ENCODE measurements at regions of chr3 and their contacts with region 1.

Region 1: DNA sequence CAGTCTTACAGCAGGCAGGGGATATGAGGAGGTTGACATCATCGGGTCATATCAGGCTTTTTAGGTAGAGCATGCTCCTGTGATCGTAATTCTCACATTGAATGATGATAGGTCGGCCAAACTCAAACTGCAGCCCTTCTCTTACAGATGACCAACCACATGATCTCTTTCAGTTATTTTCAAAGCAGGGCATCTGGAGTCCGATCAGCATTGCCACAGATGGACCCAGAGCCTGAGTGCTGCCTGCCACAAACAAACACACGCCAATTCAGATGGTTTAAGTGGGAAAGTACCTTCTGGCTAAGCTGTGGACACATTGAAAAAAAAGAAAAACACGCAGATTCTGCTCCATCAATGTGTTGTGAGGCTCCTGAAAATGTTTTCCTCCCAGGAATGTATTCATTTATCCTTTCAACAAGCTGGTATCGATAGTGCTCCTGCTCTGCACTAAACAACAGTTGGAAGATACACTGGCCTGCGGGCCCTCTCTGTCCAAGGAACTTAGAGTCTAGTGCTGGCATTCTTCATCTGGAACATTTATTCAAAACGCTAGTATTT is 31.2 kb downstream of the ARPP21 start:
- DNase-seq: no peak

Region 2: DNA sequence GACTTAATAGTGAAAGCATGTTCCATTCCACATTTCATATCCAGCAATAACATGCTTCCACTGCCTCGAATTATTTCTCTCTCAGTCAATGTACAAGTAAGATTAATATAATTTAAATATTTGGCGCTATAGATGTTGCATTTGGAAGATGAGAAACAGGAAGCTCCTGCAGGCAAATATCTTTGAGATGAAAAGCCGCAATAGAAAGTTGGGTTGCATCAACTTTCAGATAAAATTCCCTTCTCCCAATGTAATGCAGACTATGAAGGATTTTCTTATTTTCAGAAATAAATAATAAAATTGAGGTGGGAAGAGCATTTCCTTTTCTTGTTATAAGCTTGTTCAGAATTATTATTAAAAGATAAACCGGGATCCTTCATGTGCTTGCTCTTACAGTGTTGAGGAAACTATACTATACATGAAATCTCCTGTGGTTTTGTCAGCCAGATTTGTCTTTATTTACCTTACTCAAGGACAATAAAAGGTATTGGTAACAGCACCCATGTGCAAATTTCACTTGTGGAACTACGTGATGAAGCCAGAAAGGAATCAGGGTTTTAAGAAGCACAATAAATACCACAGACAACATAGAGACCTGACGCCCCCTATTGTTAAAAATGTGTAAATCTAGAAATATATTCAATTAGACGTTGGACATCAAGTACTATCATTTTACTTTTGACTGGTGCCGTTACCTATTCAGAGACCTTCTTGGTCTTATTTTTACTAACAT is 275.8 kb after region 1 on chr3:
- intact Hi-C with region 1: loop called in 1 of 2 experiments (anchors 5 kb)
- DNase-seq: no peak